Activated T-helper 1 cell treated with anti-CD3 and anti-CD28 coated beads, Interleukin-12 subunit alpha, Interleukin-12 subunit beta, Interleukin-2, Interleukin-4 antibody, amounts not matched to agents 30 ng/mL and 10 ng/mL and 1 ng/mL, durations not matched to agents 14 hours and 24 hours and 36 hours (primary cell): ENCODE measurements at regions of chr16 and their contacts with region 1.

Region 1: DNA sequence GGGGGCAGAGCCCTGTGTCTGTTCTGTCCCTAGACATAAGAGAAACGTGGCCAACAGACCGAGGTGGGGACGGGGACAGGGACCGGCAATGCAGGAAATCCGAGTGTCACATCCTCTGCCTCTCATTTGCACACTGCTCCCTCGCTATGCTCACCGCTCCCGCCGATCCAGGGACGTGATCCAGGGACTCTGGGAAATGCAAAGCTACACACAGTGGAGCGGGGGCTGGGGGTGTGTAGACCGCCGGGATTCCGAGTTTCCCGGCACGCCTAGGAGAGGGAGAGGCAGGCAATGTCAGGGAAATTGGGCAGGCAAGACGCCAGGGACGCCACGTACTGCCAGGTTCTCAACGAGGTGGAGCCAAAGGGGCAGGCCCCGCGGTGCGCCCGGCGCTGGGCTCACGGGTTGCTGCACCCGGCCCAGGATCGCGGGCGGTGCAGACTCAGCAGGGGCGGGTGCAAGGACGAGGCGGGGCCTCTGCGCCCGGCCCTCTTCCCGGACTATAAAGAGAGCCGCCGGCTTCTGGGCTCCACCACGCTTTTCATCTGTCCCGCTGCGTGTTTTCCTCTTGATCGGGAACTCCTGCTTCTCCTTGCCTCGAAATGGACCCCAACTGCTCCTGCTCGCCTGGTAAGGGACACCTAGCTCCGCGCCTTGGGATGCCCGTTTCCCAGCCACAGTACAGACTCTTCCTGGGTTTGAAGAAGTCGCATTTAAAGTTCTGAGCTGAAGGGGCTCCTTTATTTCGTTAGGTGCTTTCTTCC is at the start of gene MT1X:
- DNase-seq: peak; percentile 86
- H3K4me3 Mint-ChIP-seq: peak within 1 kb of the TSS; percentile 94
- H3K27ac Mint-ChIP-seq: peak within 1 kb of the TSS; percentile 90
- H3K4me1 Mint-ChIP-seq: peaks cover 32% of the 10 kb centered on the region
- H3K27me3 Mint-ChIP-seq: no peaks in the 10 kb centered on the region
- total RNA-seq, gene MT1X: 60.7 and 70.4 TPM in 2 replicates

Region 2: DNA sequence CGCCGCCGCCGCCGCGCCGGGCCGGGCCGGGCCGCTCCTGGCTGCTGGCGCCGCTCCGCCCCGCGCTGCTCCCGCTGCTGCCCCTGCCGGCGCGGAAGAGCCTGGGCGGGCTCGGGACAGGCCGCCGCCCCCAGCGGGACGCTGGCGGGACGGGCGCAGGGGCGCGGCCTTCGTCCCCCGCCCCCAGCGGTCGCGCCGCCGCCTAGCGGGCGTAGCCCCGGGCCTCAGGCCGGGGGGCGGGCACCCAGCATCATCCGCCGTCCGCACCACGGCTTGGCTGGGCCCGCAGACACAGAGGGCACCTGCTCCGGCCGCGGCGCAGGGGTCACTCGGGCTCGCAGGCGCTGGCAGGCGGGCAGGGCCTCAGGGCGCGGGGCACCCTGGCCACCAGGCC is 256.7 kb before region 1 on chr16 and contains the start of gene AMFR:
- intact Hi-C with region 1: loop called (anchors 1 kb)
- DNase-seq: peak; percentile 73
- H3K4me3 Mint-ChIP-seq: peak within 1 kb of the TSS; percentile 98
- H3K27ac Mint-ChIP-seq: peak within 1 kb of the TSS; percentile 85
- H3K4me1 Mint-ChIP-seq: peaks cover 35% of the 10 kb centered on the region
- H3K27me3 Mint-ChIP-seq: peaks cover 4% of the 10 kb centered on the region
- total RNA-seq, gene AMFR: 57.2 and 64.3 TPM in 2 replicates

Region 3: GRCh38 chr16:56614549-56614991 is 67.6 kb before region 1 on chr16:
- intact Hi-C with region 1: no loop called
- DNase-seq: no peak
- H3K4me3 Mint-ChIP-seq: peak overlapping the region; percentile 15
- H3K27ac Mint-ChIP-seq: peak overlapping the region; percentile 85
- H3K4me1 Mint-ChIP-seq: peaks cover 63% of the 10 kb centered on the region
- H3K27me3 Mint-ChIP-seq: peaks cover 5% of the 10 kb centered on the region

Region 4: GRCh38 chr16:56625140-56625942 is 56.8 kb before region 1 on chr16 and contains the start of gene MT1E:
- intact Hi-C with region 1: loop called (anchors 1 kb)
- DNase-seq: peak; percentile 71
- H3K4me3 Mint-ChIP-seq: peak within 1 kb of the TSS; percentile 92
- H3K27ac Mint-ChIP-seq: peak within 1 kb of the TSS; percentile 93
- H3K4me1 Mint-ChIP-seq: peaks cover 23% of the 10 kb centered on the region
- H3K27me3 Mint-ChIP-seq: peaks cover 6% of the 10 kb centered on the region
- total RNA-seq, gene MT1E: 135 TPM in 2 replicates

Region 5: GRCh38 chr16:56657555-56658326 is 24.4 kb before region 1 on chr16 and contains the start of gene MT1F:
- intact Hi-C with region 1: loop called (anchors 1 kb)
- DNase-seq: peak; percentile 38
- H3K4me3 Mint-ChIP-seq: peak within 1 kb of the TSS; percentile 98
- H3K27ac Mint-ChIP-seq: peak within 1 kb of the TSS; percentile 82
- H3K4me1 Mint-ChIP-seq: peaks cover 26% of the 10 kb centered on the region
- H3K27me3 Mint-ChIP-seq: peaks cover 21% of the 10 kb centered on the region
- total RNA-seq, gene MT1F: 4.3 and 5.2 TPM in 2 replicates

Region 6: GRCh38 chr16:56702836-56703235 is 20.7 kb after region 1 on chr16:
- intact Hi-C with region 1: loop called (anchors 1 kb)
- DNase-seq: no peak
- H3K4me3 Mint-ChIP-seq: no peak overlapping the region
- H3K27ac Mint-ChIP-seq: no peak overlapping the region
- H3K4me1 Mint-ChIP-seq: peaks cover 11% of the 10 kb centered on the region
- H3K27me3 Mint-ChIP-seq: peaks cover 11% of the 10 kb centered on the region

Region 7: GRCh38 chr16:57535680-57536305 is 853.7 kb after region 1 on chr16:
- intact Hi-C with region 1: loop called (anchors 5 kb)
- DNase-seq: peak; percentile 92
- H3K4me3 Mint-ChIP-seq: peak overlapping the region; percentile 78
- H3K27ac Mint-ChIP-seq: peak overlapping the region; percentile 93
- H3K4me1 Mint-ChIP-seq: peaks cover 62% of the 10 kb centered on the region
- H3K27me3 Mint-ChIP-seq: no peaks in the 10 kb centered on the region